ENCODE measurements at regions of chr19 and their contacts with region 1.

Region 1: DNA sequence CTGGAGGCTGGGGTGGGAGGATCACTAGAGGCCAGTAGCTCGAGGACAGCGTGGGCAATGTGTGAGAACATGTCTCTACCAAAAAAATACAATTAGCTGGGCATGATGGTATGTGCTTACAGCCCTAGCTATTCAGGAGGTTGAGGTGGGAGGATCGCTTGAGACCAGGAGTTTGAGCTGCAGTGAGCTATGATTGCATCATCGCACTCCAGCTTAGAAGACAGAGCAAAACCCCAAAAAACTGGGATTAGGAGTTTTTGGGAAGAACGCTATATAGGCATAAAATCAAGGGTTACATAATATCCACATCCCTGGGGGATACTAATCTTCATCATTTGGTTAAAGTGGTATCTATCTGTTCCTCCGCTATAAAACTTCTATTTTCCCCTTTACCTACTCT is 155.5 kb downstream of the CACNA1A start:
- DNase-seq: no peak
- H3K4me3 ChIP-seq: no peak overlapping the region
- CTCF ChIP-seq: no peak

Region 2: DNA sequence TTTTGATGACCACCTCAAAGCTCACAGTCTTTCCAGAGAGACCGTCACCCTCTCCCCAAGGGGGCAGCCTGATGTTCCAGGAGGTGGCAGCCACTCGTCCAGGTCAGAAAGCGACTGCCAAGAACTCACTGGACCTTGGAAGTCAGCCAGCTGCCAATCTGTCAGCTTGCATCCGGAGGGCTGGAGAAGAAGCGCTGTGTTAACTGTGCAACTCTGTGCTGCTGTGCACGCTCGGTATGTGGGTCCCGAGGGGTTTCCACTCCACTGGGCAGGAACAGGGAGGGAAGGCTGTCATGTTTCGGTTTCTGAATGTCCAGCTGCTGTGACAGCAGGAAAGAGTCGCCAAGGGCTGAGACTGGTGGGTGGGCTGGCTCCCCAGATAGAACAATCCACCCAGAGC is 66.3 kb after region 1 on chr19:
- in situ Hi-C with region 1: loop called (anchors 5 kb)
- DNase-seq: no peak
- H3K4me3 ChIP-seq: no peak overlapping the region
- CTCF ChIP-seq: no peak

Region 3: DNA sequence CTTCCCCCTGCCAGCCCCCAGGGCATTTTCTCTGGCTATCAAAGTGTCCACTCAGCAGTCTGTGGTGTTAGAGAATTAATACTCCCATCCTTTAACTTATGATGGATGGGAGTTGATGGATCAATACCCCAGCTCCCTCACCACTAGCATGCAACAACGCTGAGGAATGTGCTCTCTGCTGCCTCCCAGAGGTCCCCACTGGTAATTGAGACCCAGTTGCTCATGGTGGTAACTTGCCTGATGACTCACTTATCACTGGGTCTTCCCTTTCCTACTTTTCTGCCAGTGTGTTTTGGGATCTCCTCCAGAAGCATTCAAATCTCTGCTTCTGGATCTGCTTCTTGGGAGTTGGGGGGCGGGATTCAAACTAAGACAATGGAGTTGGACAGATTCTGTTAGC is 175.8 kb after region 1 on chr19:
- in situ Hi-C with region 1: no loop called
- DNase-seq: no peak
- H3K4me3 ChIP-seq: no peak overlapping the region
- CTCF ChIP-seq: peak; percentile 31